ENCODE measurements at regions of chr4 and their contacts with region 1.

Region 1: DNA sequence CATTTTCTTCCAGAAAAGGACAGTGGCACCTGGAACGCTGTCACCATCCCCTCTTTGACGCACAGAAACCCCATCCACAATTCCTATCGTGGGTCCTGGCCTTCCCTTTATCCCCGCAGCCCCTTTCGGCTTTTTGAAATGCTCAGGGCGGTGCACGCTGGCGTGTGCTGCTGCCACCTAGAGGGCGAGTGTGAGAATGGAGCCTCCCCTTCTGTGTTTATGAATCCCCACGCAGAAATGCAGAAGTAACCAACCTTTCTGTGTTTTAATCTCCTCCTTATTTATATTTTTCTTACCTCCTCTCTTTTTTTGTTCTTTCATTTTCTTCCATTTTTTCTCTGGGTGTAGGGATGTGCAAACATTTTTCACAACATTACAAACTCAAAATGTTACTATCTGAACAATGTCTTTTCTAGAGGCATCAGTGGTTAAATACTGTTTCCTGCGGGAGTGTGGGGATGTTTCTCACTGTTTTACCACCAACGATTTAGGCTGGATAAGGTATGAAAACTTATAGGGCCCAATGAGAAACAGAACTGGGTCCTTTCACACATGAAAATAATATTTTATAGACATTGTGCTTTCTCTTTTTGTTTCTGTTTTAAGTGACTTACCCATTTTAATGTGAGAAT is 50.0 kb downstream of the TMA16 start:
- DNase-seq: peak; percentile 25 to 70 (median 55)
- H3K4me3 ChIP-seq: peak overlapping the region in 1 of 4 donors; percentile 38
- H3K27ac ChIP-seq: no peak overlapping the region
- H3K4me1 ChIP-seq: no peaks in the 10 kb centered on the region
- H3K27me3 ChIP-seq: no peaks in the 10 kb centered on the region
- CTCF ChIP-seq: peak; percentile 55 to 92 (median 78)
- POLR2A ChIP-seq: no peak

Region 2: DNA sequence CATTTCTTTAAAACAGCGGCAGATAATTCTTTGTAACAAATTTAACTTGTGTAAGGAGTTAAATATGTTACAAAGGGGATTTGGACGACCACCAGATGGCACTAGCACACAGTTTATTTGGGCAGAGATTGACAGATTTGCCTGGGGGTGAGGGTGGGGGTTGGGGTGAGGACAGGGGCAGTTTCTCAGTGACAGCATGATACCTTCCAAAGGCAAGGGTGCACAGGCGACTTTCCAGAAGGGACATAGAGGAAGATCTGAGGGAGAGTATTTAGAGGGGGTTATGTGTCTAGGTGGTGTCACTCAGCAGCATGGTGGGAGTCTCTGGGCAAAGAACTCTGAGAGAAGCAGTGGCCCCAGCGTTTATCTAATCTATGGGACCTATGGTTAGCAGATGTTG is 59.6 kb before region 1 on chr4:
- intact Hi-C with region 1: loop called (anchors 5 to 10 kb)
- DNase-seq: peak in 5 of 7 donors; percentile 27 to 64 (median 51)
- H3K4me3 ChIP-seq: no peak overlapping the region
- H3K27ac ChIP-seq: no peak overlapping the region
- H3K4me1 ChIP-seq: no peaks in the 10 kb centered on the region
- H3K27me3 ChIP-seq: no peaks in the 10 kb centered on the region
- CTCF ChIP-seq: peak; percentile 32 to 60 (median 46)
- POLR2A ChIP-seq: no peak